CD8-positive, alpha-beta memory T cell (primary cell): ENCODE measurements at regions of chr6 and their contacts with region 1.

Region 1: DNA sequence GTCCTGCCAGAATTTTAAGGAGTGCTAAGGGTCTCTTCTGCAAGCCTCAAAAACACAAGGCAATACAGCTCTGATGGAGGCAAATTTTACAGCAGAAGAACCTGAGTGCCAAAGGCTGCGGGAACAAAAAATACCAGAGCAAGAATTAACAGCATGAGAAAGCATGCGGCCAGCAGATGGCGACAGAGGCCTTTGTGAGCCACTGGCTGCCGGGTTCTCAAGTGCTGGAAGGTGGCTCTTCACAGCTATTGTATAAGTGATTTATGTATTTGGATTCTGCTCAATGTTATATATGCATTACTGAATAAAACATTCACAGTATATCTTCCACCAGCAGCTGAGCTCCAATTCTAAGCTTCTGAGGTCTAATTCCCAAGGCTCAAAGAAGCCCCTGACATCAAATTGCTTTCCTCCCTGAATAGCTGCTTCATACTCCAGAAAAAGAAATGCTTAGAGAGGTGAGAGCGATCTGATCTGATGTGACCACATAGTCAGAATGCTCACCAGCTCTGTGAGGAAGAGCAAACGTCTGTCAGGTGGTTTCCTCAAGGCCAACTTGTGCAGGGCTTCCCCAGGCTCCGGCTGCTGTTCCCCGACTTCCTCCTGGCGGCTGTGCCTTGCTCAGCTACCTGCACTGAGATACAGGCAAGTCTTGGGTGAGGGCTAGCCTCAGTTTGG is 58.6 kb downstream of the PPP1R3G start:
- DNase-seq: peak; percentile 67 to 85 (median 71)
- H3K4me3 ChIP-seq: no peak overlapping the region
- H3K4me3 Mint-ChIP-seq: no peak overlapping the region
- H3K27ac ChIP-seq: no peak overlapping the region
- H3K27ac Mint-ChIP-seq: peak overlapping the region in 1 of 8 donors; percentile 55
- H3K4me1 ChIP-seq: no peaks in the 10 kb centered on the region
- H3K4me1 Mint-ChIP-seq: peaks cover 0 to 3% (median 0%) of the 10 kb centered on the region in 3 donors
- H3K27me3 ChIP-seq: no peaks in the 10 kb centered on the region
- H3K27me3 Mint-ChIP-seq: no peaks in the 10 kb centered on the region

Region 2: GRCh38 chr6:4698901-4699659 is 444.7 kb before region 1 on chr6:
- CTCF ChIA-PET with region 1: no interaction called
- POLR2A ChIA-PET with region 1: no interaction called
- DNase-seq: no peak
- H3K4me3 ChIP-seq: no peak overlapping the region
- H3K4me3 Mint-ChIP-seq: no peak overlapping the region
- H3K27ac ChIP-seq: no peak overlapping the region
- H3K27ac Mint-ChIP-seq: no peak overlapping the region
- H3K4me1 ChIP-seq: no peaks in the 10 kb centered on the region
- H3K4me1 Mint-ChIP-seq: no peaks in the 10 kb centered on the region
- H3K27me3 ChIP-seq: no peaks in the 10 kb centered on the region
- H3K27me3 Mint-ChIP-seq: peaks cover 5 to 17% of the 10 kb centered on the region in 2 donors

Region 3: GRCh38 chr6:4714961-4715501 is 428.7 kb before region 1 on chr6:
- CTCF ChIA-PET with region 1: no interaction called
- POLR2A ChIA-PET with region 1: no interaction called
- DNase-seq: no peak
- H3K4me3 ChIP-seq: no peak overlapping the region
- H3K4me3 Mint-ChIP-seq: no peak overlapping the region
- H3K27ac ChIP-seq: no peak overlapping the region
- H3K27ac Mint-ChIP-seq: peak overlapping the region in 1 of 8 donors; percentile 6
- H3K4me1 ChIP-seq: no peaks in the 10 kb centered on the region
- H3K4me1 Mint-ChIP-seq: peaks cover 4 to 9% (median 4%) of the 10 kb centered on the region in 3 donors
- H3K27me3 ChIP-seq: no peaks in the 10 kb centered on the region
- H3K27me3 Mint-ChIP-seq: peaks cover 0 to 5% of the 10 kb centered on the region in 2 donors

Region 4: DNA sequence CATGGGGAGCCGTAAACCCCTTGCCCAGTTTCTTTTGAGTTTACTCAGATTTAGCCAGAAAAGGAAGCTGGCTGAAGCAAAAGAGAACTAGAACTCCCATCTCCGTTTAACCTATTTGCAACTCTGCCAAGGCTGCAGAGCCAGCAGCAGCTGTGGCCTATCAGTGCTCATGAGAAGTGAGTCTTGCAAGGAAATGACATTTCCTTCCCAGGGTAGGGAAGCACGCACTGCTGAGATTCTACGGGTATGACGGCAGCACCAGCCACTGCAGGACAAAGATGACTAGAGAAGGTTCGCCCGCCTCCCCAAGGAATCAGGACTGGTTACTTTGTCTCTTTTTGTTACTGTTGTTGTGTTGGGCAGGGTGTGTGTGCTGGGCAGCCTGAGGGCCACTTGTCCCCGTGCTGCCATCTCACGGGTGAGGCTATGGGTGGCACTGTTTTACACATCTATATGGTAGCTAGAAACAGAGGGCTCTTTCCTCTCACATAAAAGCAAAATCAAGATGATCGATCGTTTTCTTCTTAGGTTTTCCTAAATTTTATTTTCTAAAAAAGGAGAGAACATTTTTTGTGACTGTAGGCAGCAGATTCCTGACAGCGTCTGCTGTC is 10.9 kb before region 1 on chr6:
- CTCF ChIA-PET with region 1: interaction called, 15 read pairs
- POLR2A ChIA-PET with region 1: no interaction called
- DNase-seq: no peak
- H3K4me3 ChIP-seq: no peak overlapping the region
- H3K4me3 Mint-ChIP-seq: no peak overlapping the region
- H3K27ac ChIP-seq: no peak overlapping the region
- H3K27ac Mint-ChIP-seq: peak overlapping the region in 1 of 8 donors; percentile 64
- H3K4me1 ChIP-seq: no peaks in the 10 kb centered on the region
- H3K4me1 Mint-ChIP-seq: peaks cover 0 to 7% (median 3%) of the 10 kb centered on the region in 3 donors
- H3K27me3 ChIP-seq: no peaks in the 10 kb centered on the region
- H3K27me3 Mint-ChIP-seq: no peaks in the 10 kb centered on the region

Region 5: DNA sequence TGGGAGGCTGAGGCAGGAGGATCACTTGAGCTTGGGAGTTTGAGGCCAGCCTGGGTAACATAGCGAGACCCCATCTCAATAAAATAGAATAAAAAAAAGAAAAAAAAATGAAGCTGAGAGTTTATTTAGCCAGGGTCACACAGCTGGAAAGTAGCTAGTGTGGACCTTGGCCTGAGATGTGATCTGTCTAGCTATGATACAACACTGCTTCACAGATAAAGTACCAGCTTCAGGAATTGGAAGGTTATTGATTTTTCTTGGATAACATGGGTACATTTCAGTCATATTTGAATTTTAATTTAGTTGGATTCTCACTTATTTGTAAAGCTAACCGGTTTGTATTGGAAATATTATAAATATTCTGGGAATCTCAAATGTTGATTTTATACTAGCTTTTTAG is 122.7 kb after region 1 on chr6:
- CTCF ChIA-PET with region 1: interaction called, 12 read pairs
- POLR2A ChIA-PET with region 1: no interaction called
- DNase-seq: no peak
- H3K4me3 ChIP-seq: no peak overlapping the region
- H3K4me3 Mint-ChIP-seq: no peak overlapping the region
- H3K27ac ChIP-seq: no peak overlapping the region
- H3K27ac Mint-ChIP-seq: no peak overlapping the region
- H3K4me1 ChIP-seq: peaks cover 9% of the 10 kb centered on the region
- H3K4me1 Mint-ChIP-seq: peaks cover 17 to 27% (median 20%) of the 10 kb centered on the region in 3 donors
- H3K27me3 ChIP-seq: no peaks in the 10 kb centered on the region
- H3K27me3 Mint-ChIP-seq: no peaks in the 10 kb centered on the region

Region 6: DNA sequence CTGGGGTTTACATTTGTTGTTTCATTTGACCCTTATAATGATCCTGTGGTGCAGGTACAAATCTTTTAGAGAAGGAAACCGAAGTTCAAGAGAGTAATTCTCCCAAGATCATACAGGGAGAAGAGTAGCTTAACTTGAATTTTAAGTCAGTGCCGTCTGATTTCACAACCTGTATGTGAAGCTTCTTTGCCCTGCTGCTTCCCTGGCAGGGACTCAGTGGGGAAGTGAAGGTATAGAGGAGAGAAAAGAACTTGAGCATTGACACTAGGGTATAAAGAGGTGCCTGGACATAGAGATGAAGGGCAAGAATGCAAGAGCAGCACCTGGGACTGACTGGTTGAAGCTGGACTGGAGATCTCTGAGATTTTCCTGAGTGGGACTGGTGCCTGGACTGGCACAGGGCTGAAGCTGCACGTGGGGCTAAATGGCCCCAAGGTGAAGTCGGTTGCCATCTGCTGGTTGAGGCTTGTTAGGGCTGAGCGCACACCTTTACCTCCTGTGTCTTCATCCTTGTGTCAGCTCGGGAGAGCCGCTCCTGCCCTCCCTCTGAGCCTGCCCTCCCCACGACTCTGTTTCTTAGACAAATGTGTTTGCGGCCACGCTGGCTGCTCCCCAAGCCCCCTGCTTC is 159.3 kb after region 1 on chr6:
- CTCF ChIA-PET with region 1: interaction called, 70 read pairs
- POLR2A ChIA-PET with region 1: interaction called, 4 read pairs
- DNase-seq: peak; percentile 25 to 74 (median 52)
- H3K4me3 ChIP-seq: no peak overlapping the region
- H3K4me3 Mint-ChIP-seq: peak overlapping the region; percentile 44 to 85 (median 79)
- H3K27ac ChIP-seq: no peak overlapping the region
- H3K27ac Mint-ChIP-seq: peak overlapping the region in 6 of 8 donors; percentile 7 to 87 (median 70)
- H3K4me1 ChIP-seq: peaks cover 26% of the 10 kb centered on the region
- H3K4me1 Mint-ChIP-seq: peaks cover 29 to 34% (median 34%) of the 10 kb centered on the region in 3 donors
- H3K27me3 ChIP-seq: no peaks in the 10 kb centered on the region
- H3K27me3 Mint-ChIP-seq: no peaks in the 10 kb centered on the region

Region 7: GRCh38 chr6:5817869-5818268 is 674.1 kb after region 1 on chr6:
- CTCF ChIA-PET with region 1: no interaction called
- POLR2A ChIA-PET with region 1: no interaction called
- DNase-seq: no peak
- H3K4me3 ChIP-seq: no peak overlapping the region
- H3K4me3 Mint-ChIP-seq: no peak overlapping the region
- H3K27ac ChIP-seq: no peak overlapping the region
- H3K27ac Mint-ChIP-seq: no peak overlapping the region
- H3K4me1 ChIP-seq: peaks cover 17% of the 10 kb centered on the region
- H3K4me1 Mint-ChIP-seq: peaks cover 13 to 18% (median 17%) of the 10 kb centered on the region in 3 donors
- H3K27me3 ChIP-seq: no peaks in the 10 kb centered on the region
- H3K27me3 Mint-ChIP-seq: peaks cover 0 to 1% of the 10 kb centered on the region in 2 donors

Region 8: DNA sequence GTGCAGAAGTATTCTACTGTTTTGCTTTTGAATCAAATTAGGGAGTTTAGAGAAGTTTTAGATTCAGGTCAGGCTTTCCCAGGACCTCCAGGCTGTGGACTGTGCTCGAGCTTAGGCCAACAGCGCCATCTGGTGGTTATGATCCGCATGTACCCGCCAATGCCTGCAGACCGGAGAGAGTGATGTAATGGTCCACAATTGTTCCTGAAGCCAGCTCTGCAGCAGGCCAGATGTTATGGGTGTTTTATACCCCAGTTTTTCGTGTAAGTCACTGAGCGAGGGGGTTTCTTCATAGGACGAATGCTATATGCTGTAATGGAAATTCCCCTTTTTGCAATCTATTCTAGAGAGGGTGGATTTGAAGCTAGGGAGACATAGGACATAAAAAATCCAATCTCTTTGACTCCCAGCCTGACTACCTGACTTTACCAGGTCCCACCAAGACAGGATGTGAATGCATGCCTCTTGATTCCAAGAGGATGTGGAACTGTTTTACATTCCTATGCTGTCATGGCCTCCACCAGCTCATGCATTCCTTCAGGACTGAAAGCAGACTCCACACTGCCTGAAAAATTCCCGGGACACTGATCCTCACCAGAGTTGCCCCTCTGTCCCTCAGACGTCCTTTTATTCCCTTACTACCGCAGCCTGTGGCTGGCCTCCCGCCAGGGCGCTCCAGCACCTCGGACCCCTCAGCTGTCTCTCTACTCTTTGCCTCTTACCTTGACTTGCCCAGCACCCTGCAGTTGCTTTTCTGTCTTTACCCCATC is 1403.5 kb after region 1 on chr6:
- CTCF ChIA-PET with region 1: interaction called, 34 read pairs
- POLR2A ChIA-PET with region 1: no interaction called
- DNase-seq: peak; percentile 59 to 85 (median 70)
- H3K4me3 ChIP-seq: peak overlapping the region; percentile 52
- H3K4me3 Mint-ChIP-seq: peak overlapping the region; percentile 0 to 88 (median 78)
- H3K27ac ChIP-seq: no peak overlapping the region
- H3K27ac Mint-ChIP-seq: peak overlapping the region in 1 of 8 donors; percentile 20
- H3K4me1 ChIP-seq: no peaks in the 10 kb centered on the region
- H3K4me1 Mint-ChIP-seq: peaks cover 5 to 14% (median 7%) of the 10 kb centered on the region in 3 donors
- H3K27me3 ChIP-seq: peaks cover 25% of the 10 kb centered on the region
- H3K27me3 Mint-ChIP-seq: peaks cover 43 to 50% of the 10 kb centered on the region in 2 donors